GM18951 (cell line): ENCODE measurements at regions of chr2 and their contacts with region 1.

Region 1: GRCh38 chr2:177332041-177332991 is 60.3 kb upstream of the AGPS start:
- POLR2A ChIP-seq: no peak

Region 2: DNA sequence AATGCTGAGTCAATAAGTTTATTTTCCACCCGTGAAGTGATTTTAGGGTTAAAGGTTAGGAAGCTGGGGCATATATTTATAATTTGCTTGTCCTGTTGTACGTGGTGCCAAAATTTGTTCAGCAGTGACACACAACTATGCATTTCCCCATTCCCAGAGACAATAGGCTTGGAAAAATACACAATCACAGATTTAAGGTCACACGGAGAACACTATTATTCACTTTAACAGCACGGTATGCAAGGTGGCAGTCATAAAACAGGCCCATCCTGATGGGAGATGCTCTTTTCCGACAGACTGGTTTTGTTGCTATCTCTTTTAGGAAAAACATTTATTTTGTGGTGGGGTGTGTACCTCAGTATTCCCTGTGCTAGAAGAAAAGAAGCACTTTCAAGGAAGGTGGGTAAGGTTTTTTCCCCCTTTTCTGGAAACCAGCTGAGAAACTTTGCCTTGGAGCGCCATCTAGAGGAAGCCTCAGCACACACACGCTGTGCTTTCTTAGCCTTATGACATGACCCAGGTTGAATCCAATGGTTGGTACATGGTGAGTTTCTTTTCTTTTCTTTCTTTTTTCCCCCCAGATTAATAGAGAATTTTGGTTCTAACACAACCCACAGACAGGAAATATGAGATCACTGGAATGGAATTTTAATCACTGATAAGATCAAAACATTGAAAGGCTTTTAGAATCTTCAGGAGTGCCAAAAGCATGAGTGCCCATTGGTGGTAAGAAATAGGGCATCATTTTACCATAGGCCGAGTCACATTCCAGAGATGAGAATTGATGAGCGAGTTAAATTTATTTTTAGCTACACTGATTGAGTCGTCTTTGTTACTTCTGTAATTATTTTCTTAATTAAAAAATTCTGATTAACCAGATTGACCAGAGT is 392.3 kb after region 1 on chr2:
- in situ Hi-C with region 1: loop called (anchors 10 kb)
- POLR2A ChIP-seq: no peak

Region 3: DNA sequence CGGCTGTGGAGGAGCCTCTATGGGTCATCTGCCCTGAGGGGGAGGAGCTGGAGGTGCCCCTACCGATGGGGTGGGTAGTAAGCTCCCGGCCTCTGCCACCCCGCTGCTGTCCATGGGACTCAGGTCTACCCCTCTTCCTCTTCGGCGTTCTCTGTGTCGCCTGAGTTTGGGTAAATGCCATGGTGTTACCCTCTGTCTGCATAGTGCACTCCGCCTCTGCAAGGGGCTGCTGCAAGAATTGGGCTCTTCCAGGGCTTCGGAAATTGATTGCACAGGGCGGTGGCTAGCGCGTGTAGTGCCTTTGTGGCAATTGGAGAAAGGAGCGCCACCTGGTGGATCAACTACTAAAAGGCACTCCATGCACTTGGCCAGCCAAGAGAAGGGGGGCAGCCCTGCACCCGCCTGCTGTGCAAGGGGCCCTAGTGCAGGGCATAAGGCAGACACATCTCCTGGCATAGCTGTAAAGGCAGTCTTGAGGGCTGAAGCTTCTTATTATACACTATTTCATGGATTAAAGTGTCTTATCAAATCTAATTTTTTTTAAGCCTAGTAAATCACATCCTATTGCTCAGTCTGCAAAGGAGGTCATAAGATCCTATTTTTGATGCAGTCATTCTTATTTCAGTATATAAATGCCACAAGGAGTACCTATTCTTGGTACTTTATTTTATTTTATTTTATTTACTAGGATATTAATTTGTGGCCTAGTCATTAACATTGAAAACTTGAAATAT is 431.4 kb after region 1 on chr2:
- in situ Hi-C with region 1: loop called (anchors 10 kb)
- POLR2A ChIP-seq: no peak